ENCODE measurements at regions of chr14 and their contacts with region 1.

Region 1: DNA sequence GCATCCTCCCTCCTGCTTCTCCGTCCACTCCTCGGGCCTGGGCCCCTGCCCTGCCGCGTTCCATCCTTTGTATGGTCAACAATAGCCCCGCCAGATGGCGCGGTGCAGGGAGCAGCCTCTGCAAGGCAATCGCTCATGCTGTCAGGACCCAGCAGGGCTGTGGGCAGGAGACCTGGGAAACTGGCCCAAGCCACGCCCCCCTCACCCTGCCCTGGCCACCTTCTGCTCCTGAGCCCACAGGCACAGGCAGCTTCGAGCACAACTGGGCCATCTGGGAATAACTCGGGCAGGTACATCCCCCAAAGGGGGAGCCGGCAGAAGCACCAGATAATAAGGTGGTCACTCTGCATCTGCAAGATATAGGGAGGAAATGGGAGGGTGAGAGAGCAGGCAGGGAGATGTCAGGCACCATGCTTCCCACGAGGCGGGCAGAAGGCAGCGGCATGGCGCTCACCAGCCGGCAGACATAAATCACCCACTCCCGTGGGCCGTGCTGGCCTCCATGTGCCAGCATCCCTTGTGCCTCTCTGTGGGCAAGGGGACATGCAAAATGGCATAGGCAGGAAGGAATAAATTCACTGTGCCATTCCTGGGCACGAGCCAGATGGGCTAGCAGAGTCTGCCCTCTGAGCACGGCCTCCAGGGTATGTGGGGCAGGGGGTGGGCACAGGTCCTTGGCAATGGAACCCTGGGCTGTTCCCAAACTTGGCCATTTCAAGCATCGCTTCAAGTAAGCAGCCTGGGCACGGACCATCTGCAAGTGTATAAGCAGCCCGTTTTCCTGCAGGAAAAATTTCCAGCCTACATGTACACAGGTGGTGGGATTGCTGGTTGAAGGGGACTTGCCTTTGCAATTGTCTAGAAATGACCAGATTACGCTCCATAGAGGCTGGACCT is 40.5 kb downstream of the CCDC85C start:
- DNase-seq: peak; percentile 79
- ATAC-seq: peak; percentile 68 to 85 (median 76)
- H3K4me3 ChIP-seq: no peak overlapping the region
- H3K27ac ChIP-seq: peak overlapping the region in 7 of 10 donors; percentile 18 to 81 (median 68)
- H3K4me1 ChIP-seq: peaks cover 28 to 85% (median 69%) of the 10 kb centered on the region in 9 donors
- H3K27me3 ChIP-seq: no peaks in the 10 kb centered on the region
- CTCF ChIP-seq: peak in 8 of 9 donors; percentile 27 to 68 (median 44)

Region 2: DNA sequence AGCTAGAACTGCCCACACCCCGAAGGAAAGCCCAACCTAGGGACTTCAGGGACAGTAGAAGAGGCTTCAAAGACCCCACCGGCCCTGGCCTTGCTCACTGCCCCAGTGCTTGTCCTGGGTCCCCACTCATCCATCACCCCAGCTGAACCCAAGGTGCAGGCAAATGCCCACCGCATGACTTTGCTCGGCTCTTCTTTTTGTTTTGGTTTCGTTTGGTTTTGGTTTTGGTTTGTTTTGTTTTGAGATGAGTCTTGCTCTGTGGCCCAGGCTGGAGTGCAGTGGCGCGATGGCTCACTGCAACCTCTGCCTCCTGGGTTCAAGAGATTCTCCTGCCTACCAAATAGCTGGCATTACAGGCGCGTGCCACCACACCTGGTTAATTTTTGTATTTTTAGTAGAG is 31.6 kb after region 1 on chr14:
- intact Hi-C with region 1: loop called in 6 of 10 experiments (anchors 5 kb)
- DNase-seq: no peak
- ATAC-seq: no peak
- H3K4me3 ChIP-seq: no peak overlapping the region
- H3K27ac ChIP-seq: peak overlapping the region in 4 of 10 donors; percentile 11 to 79 (median 50)
- H3K4me1 ChIP-seq: peaks cover 48 to 99% (median 88%) of the 10 kb centered on the region in 9 donors
- H3K27me3 ChIP-seq: no peaks in the 10 kb centered on the region
- CTCF ChIP-seq: no peak

Measured in heart right ventricle (tissue), 16 donors.